ENCODE measurements at regions of chr14 and their contacts with region 1.

Region 1: DNA sequence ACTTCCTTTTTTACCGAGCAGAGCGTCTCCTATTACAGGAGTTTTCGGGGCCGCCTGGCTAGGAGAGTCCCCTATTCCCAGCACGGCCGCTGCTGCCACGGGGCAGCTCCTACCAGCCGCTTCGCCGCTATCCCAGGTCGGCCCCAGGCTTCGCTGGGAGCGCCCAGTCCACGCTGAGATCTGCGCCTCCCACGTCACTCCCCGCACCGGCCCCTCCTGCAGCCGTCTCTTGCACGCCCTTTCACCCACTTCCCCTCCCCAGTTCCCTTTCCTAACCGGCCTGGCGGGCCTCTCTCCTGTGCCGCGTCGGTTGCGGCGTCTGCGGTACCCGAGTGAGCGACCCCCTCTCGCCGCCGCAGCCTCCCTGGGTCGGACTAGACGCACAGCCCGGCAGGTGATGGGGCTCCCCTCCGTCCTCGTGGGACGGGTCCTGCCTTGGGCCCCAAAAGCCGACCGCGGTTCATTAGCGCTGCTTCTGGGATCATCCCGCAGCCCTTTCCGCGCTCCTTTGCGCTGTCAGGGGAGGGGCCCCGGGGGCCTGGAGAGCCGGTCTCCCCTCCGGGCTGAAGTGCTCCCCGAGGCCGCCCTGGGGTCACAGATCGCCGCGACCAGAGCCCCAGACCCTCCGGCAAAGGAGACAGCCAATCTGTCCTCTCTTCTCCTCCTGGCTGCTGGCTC is 1318.4 kb downstream of the TMEM121 start:
- DNase-seq: peak in 1 of 2 experiments; percentile 43
- H3K4me3 ChIP-seq: peak overlapping the region; percentile 71
- H3K27ac ChIP-seq: no peak overlapping the region
- H3K4me1 ChIP-seq: no peaks in the 10 kb centered on the region; the same call in 1 of the 2 replicates
- H3K27me3 ChIP-seq: peaks cover 12% of the 10 kb centered on the region; the same call in 1 of the 2 replicates
- CTCF ChIP-seq: no peak

Region 2: GRCh38 chr14:106872611-106873446 is 28.1 kb after region 1 on chr14:
- CTCF ChIA-PET with region 1: interaction called, 14 read pairs
- POLR2A ChIA-PET with region 1: no interaction called
- intact Hi-C with region 1: loop called (anchors 1 kb)
- DNase-seq: peak; percentile 67 to 91
- H3K4me3 ChIP-seq: no peak overlapping the region
- H3K27ac ChIP-seq: no peak overlapping the region
- H3K4me1 ChIP-seq: no peaks in the 10 kb centered on the region
- H3K27me3 ChIP-seq: no peaks in the 10 kb centered on the region
- CTCF ChIP-seq: peak; percentile 42

Measured in PC-9 (cell line).